ENCODE measurements at regions of chr1 and their contacts with region 1.

Region 1: GRCh38 chr1:154335025-154335714 is 9.8 kb downstream of the ATP8B2 start:
- DNase-seq: peak; percentile 99
- ATAC-seq: peak; percentile 97
- H3K4me3 Mint-ChIP-seq: no peak overlapping the region
- H3K27ac Mint-ChIP-seq: peak overlapping the region; percentile 88
- H3K4me1 Mint-ChIP-seq: peaks cover 61% of the 10 kb centered on the region
- H3K27me3 Mint-ChIP-seq: no peaks in the 10 kb centered on the region
- CTCF ChIP-seq: peak; percentile 85

Region 2: DNA sequence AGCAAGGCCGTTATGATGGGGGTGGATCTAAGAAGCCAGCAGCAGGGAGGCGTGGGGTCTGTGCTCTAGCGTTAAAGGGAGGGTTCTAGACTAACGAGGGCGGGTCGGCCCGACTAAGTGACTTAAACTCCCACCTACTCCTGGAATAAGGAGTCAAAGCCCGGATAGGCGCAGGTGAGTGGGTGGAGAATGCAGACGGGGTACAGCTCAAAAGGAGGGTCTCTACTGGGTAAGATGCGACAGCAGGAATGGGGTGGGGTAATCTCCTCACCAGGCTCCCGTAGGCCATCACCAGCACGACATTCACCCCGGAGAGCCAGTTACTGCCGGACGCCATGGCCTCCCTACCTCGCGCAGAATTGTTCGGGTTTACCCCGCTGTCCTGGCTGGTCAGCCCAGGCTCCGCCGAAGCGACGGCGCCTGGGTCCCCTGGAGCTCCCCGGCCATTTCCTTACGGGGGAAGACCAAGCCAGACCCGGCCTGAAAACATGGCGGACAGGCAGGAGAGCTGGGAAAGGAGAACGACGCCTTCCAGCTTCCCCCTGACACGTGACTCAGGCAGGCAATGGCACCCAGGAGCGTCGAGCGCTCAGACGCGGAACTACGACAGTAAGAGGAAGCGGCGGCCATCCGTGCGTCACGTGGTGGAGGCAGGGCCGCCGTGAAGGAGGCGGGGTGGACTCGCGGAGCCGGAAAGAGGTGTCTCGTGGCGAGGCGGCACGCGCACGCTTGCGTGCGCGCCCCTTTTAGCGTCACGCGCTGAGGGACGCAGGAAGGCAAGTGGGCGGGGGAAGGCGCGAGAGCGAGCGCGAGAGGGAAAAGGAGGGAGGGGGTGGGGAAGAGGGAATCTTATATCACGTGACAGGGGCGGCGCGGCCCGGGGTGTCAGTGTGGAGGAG is 114.8 kb before region 1 on chr1 and contains the start of gene UBAP2L:
- CTCF ChIA-PET with region 1: interaction called, 16 read pairs
- POLR2A ChIA-PET with region 1: no interaction called
- intact Hi-C with region 1: no loop called
- DNase-seq: peak; percentile 99
- ATAC-seq: peak; percentile 93
- H3K4me3 Mint-ChIP-seq: peak within 1 kb of the TSS; percentile 96
- H3K27ac Mint-ChIP-seq: peak within 1 kb of the TSS; percentile 98
- H3K4me1 Mint-ChIP-seq: peaks cover 61% of the 10 kb centered on the region
- H3K27me3 Mint-ChIP-seq: no peaks in the 10 kb centered on the region
- CTCF ChIP-seq: no peak
- total RNA-seq, gene UBAP2L: 183 to 195 TPM

Region 3: GRCh38 chr1:154318386-154318785 is 16.8 kb before region 1 on chr1:
- CTCF ChIA-PET with region 1: interaction called, 214 read pairs
- POLR2A ChIA-PET with region 1: no interaction called
- intact Hi-C with region 1: no loop called
- DNase-seq: no peak
- ATAC-seq: no peak
- H3K4me3 Mint-ChIP-seq: no peak overlapping the region
- H3K27ac Mint-ChIP-seq: no peak overlapping the region
- H3K4me1 Mint-ChIP-seq: no peaks in the 10 kb centered on the region
- H3K27me3 Mint-ChIP-seq: no peaks in the 10 kb centered on the region
- CTCF ChIP-seq: no peak

Region 4: DNA sequence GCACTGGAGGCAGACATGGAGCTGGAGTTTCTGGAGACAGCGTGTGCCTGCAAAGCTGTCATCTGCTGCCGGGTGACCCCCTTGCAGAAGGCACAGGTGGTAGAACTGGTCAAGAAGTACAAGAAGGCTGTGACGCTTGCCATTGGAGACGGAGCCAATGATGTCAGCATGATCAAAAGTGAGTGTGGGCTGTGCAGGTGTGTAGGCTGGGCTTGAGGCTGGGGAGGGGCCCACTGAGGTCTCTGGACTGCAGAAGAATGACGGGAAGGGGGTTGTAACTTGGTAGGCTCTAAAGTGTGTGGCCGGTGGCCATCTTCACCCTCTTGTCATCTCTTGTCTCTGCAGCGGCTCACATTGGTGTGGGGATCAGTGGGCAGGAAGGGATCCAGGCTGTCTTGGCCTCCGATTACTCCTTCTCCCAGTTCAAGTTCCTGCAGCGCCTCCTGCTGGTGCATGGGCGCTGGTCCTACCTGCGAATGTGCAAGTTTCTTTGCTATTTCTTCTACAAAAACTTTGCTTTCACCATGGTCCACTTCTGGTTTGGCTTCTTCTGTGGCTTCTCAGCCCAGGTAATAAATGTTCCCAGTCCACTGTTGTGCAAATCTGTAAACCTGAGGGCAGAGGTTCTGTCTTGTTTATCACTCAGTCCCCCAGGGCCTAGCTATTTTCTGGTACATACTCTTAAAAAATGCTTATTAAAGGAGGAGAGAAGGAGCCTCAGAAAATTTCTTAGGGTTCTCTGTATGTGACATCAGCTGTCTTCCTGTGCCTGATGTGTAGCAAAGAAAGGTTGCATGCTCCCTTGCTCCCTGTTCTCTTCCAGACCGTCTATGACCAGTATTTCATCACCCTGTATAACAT is 10.0 kb after region 1 on chr1:
- CTCF ChIA-PET with region 1: interaction called, 99 read pairs
- POLR2A ChIA-PET with region 1: interaction called, 27 read pairs
- intact Hi-C with region 1: no loop called
- DNase-seq: peak; percentile 81
- ATAC-seq: no peak
- H3K4me3 Mint-ChIP-seq: no peak overlapping the region
- H3K27ac Mint-ChIP-seq: peak overlapping the region; percentile 78
- H3K4me1 Mint-ChIP-seq: peaks cover 76% of the 10 kb centered on the region
- H3K27me3 Mint-ChIP-seq: no peaks in the 10 kb centered on the region
- CTCF ChIP-seq: peak; percentile 84

Region 5: GRCh38 chr1:154404984-154405761 is 70.0 kb after region 1 on chr1 and contains the start of gene IL6R:
- CTCF ChIA-PET with region 1: interaction called, 12 read pairs
- POLR2A ChIA-PET with region 1: interaction called, 3 read pairs
- intact Hi-C with region 1: no loop called
- DNase-seq: peak; percentile 74
- ATAC-seq: peak; percentile 48
- H3K4me3 Mint-ChIP-seq: peak within 1 kb of the TSS; percentile 70
- H3K27ac Mint-ChIP-seq: peak within 1 kb of the TSS; percentile 78
- H3K4me1 Mint-ChIP-seq: peaks cover 89% of the 10 kb centered on the region
- H3K27me3 Mint-ChIP-seq: no peaks in the 10 kb centered on the region
- CTCF ChIP-seq: peak; percentile 42
- total RNA-seq, gene IL6R: 2.2 to 2.5 TPM

Region 6: DNA sequence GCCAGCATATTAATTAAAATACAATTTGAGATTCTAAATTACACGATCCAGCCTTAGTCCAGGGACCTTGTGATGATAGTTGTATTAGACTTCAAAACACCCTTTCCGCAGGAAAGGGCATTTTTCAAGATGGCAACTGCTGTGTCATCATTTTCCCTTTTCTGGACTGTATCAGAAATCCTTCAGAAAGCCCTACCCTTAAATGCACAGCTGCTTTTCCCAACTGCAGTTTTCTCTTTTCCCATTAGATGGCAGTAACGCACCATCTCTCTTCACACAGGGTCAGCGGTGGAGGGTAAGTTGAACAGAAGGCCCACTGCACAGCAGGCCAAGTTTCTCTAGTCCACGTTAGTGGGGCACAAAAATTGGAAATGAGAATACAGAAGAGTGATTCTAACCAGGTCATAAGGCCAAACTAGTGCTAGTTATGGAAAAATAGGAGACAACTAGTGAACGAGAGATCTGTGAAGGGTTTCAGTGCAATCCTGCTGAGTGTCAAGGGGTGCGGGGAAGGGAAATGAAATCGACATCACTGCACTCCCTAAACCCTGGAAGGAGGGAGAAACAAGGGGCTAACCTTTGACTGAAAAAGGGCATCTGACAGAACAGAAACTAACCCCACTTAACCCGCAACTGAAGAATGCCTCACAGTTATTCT is 144.7 kb after region 1 on chr1:
- CTCF ChIA-PET with region 1: interaction called, 19 read pairs
- POLR2A ChIA-PET with region 1: no interaction called
- intact Hi-C with region 1: loop called (anchors 10 kb)
- DNase-seq: peak; percentile 69
- ATAC-seq: peak; percentile 94
- H3K4me3 Mint-ChIP-seq: no peak overlapping the region
- H3K27ac Mint-ChIP-seq: no peak overlapping the region
- H3K4me1 Mint-ChIP-seq: peaks cover 18% of the 10 kb centered on the region
- H3K27me3 Mint-ChIP-seq: peaks cover 4% of the 10 kb centered on the region
- CTCF ChIP-seq: peak; percentile 98

Measured in activated CD8-positive, alpha-beta T cell treated with anti-CD3 and anti-CD28 coated beads for 36 hours (primary cell).